ENCODE measurements at regions of chr4 and their contacts with region 1.

Region 1: DNA sequence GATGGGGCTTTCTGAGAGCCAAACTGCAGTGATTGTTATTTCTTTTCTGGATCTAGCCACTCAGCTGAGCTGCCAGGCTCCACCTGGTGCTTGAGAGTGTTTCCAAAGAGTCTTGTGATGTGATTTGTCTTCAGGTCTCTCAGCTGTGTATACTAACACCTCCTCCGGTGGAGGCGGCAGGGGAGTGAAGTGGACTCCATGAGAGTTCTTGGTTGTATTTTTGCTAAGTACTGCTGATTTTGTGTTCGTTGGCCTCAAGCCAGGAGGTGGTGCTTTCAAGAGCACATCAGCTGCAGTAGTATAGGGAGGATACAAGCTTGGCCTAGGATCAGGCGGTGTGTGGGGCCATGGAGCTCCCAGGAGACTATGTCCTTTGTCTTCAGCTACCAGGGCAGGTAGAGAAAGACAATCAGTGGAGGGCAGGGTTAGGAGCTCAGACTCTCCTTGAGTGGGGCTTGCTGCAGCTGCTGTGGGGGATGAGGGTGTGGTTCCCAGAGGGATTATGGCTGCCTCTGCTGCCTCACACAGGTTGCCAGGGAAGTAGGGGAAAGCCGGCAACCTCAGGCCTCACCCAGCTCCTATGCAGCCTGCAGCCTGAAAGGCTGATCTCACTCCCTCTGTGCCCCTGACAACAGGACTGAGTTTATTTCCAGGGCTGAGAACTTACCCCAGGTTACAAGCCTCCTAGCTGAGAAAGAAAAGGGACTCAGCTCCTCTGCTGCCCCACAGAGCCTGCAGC is 62.4 kb downstream of the NPFFR2 start:
- DNase-seq: no peak
- CTCF ChIP-seq: no peak

Region 2: DNA sequence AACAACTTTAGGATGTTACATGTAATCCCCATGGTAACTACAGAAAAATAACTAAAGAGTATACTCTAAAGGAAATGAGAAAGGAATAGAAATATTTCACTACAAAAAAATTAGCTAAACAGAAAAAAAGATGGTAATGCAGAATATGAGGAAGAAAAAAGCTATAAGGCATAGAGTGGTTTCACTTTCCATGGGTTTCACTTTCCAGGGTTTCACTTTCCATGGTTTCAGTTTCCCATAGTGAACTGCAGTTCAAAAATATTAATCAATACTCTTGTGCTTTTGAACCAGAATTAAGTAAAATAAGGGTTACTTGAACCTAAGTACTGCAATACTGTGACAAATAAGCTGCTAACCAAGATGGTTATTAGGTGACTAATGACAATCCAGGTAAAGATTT is 20.4 kb before region 1 on chr4:
- CTCF ChIA-PET with region 1: no interaction called
- POLR2A ChIA-PET with region 1: no interaction called
- DNase-seq: no peak
- CTCF ChIP-seq: no peak

Region 3: GRCh38 chr4:72107456-72107855 is 13.2 kb after region 1 on chr4:
- CTCF ChIA-PET with region 1: interaction called, 10 read pairs
- POLR2A ChIA-PET with region 1: no interaction called
- DNase-seq: no peak
- CTCF ChIP-seq: no peak

Region 4: DNA sequence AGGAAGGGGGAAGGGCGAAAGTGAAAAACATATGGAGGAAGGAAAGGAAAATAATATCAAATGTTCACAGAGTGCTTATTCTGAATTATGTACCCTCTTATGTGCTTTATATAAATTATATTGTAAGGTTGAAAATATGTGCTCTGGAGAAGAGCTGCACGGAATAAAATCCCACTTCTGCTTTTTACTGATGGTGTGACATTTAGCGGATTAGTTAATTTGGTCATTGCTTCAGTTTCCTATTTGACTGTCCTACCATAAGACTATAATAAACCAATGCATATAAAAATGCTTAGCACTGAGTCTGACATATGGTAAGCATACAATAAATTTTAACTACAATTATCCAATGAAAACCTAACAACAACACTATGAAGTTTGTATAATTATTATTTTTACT is 23.8 kb after region 1 on chr4:
- CTCF ChIA-PET with region 1: no interaction called
- POLR2A ChIA-PET with region 1: no interaction called
- DNase-seq: no peak
- CTCF ChIP-seq: no peak

Measured in GM10248 (cell line).